Posterior cingulate gyrus (tissue), 11 donors: ENCODE measurements at regions of chr21 and their contacts with region 1.

Region 1: DNA sequence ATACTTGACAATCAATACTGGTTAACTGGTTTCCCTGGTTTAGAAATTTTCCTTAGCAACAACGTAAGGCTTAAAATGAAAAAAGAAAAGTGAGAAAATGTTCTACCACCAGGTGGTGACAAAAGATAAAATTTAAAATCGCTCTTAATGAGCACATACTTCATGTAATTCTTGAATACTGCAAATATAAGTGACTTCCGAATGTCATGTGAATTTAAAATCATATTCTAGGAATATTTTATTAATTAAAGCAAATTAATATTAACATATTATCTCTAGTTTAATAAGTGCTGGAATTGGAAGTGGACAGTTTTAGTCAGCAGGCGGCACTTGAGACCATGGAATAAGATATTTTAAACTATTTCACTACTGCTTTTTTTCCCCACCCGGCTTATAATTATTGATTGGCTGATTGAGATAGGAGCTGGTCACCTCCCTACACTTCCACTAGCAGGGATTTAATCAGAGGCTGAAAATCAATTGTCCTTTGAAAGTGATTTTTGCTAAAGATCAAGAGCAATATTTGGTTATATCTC is 5.0 kb upstream of the ADAMTS1 start:
- DNase-seq: no peak

Region 2: DNA sequence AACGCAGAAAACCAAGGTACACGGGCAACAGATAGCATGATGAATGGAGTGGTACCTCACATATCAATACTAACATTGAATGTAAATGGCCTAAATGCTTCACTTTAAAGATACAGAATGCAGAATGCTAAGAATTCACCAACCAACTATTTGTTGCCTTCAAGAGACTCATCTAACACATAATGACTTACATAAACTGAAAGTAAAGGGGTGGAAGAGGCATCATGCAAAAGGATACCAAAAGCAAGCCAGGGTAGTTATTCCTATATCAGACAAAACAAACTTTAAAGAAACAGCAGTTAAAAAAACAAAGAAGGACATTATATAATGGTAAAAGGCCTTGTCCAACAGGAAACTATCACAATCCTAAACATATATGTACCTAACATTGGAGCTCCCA is 542.5 kb before region 1 on chr21:
- intact Hi-C with region 1: no loop called
- DNase-seq: no peak

Region 3: GRCh38 chr21:26732432-26733221 is 117.5 kb before region 1 on chr21:
- intact Hi-C with region 1: no loop called
- DNase-seq: peak in 9 of 10 donors; percentile 33 to 89 (median 60)

Region 4: GRCh38 chr21:27476696-27477095 is 626.5 kb after region 1 on chr21:
- intact Hi-C with region 1: loop called (anchors 10 kb)
- DNase-seq: no peak

Region 5: GRCh38 chr21:27564684-27565301 is 714.6 kb after region 1 on chr21:
- intact Hi-C with region 1: loop called (anchors 5 kb)
- DNase-seq: peak in 6 of 10 donors; percentile 28 to 88 (median 47)

Region 6: GRCh38 chr21:27700974-27701614 is 850.9 kb after region 1 on chr21:
- intact Hi-C with region 1: loop called (anchors 1 kb)
- DNase-seq: peak; percentile 62 to 97 (median 86)

Region 7: GRCh38 chr21:28336314-28336713 is 1486.1 kb after region 1 on chr21:
- intact Hi-C with region 1: loop called (anchors 1 kb)
- DNase-seq: no peak

Region 8: GRCh38 chr21:28745131-28746016 is 1895.2 kb after region 1 on chr21:
- intact Hi-C with region 1: loop called (anchors 1 kb)
- DNase-seq: peak; percentile 47 to 94 (median 76)